Activated CD8-positive, alpha-beta T cell treated with anti-CD3 and anti-CD28 coated beads for 36 hours (primary cell): ENCODE measurements at regions of chr5 and their contacts with region 1.

Region 1: DNA sequence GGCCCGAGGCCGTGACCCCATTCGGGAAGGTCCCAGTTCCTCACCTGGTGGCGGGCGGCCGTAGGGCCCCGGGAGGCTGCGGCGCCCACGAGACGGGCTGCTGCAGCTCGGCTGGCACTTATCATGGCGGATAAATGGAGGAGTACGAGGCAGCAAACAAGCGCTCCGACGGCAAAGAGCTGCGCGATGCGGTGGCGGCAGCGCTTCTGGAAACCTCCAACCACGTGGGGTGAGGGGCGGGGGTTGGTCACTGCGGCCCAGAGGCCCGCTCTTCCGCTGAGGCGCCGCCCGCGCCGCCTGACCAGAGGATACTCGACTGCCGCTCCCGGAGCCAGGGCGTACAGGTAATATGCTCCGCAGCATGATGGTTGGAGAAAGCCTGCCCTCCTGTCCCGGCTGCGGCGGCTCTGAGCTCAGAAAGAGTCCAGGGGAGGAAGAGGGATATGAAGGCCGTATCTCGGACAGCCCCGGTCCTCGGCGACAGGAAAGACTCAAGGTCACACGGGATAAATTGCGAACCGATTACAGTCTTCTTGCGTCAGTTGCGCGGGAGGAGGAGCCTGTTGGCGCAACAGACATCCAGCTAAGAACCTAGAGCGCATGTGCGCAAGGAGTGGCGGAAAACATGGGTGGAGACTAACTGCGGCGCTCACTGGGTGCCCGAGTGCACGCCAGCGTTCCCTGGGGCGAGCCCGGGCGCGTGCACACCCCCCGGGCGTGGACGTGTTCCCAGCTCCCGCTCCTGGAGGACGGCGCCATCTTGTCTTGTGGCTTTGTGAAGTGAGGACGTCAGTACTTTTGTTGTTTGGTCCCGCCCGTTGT is at the start of gene HSPA9:
- DNase-seq: peak; percentile 99
- ATAC-seq: peak; percentile 89
- H3K4me3 Mint-ChIP-seq: peak within 1 kb of the TSS; percentile 98
- H3K27ac Mint-ChIP-seq: peak within 1 kb of the TSS; percentile 100
- H3K4me1 Mint-ChIP-seq: peaks cover 34% of the 10 kb centered on the region
- H3K27me3 Mint-ChIP-seq: no peaks in the 10 kb centered on the region
- CTCF ChIP-seq: no peak
- total RNA-seq, gene HSPA9: 426 to 442 TPM

Region 2: GRCh38 chr5:138464008-138464387 is 111.4 kb before region 1 on chr5:
- CTCF ChIA-PET with region 1: interaction called, 3 read pairs
- POLR2A ChIA-PET with region 1: interaction called, 12 read pairs
- intact Hi-C with region 1: no loop called
- DNase-seq: peak; percentile 94
- ATAC-seq: peak; percentile 57
- H3K4me3 Mint-ChIP-seq: peak overlapping the region; percentile 82
- H3K27ac Mint-ChIP-seq: peak overlapping the region; percentile 97
- H3K4me1 Mint-ChIP-seq: peaks cover 53% of the 10 kb centered on the region
- H3K27me3 Mint-ChIP-seq: no peaks in the 10 kb centered on the region
- CTCF ChIP-seq: peak; percentile 94

Region 3: GRCh38 chr5:138542956-138543729 is 32.3 kb before region 1 on chr5 and contains the start of gene ETF1:
- CTCF ChIA-PET with region 1: interaction called, 13 read pairs
- POLR2A ChIA-PET with region 1: interaction called, 36 read pairs
- intact Hi-C with region 1: loop called (anchors 1 kb)
- DNase-seq: peak; percentile 100
- ATAC-seq: peak; percentile 94
- H3K4me3 Mint-ChIP-seq: peak within 1 kb of the TSS; percentile 99
- H3K27ac Mint-ChIP-seq: peak within 1 kb of the TSS; percentile 100
- H3K4me1 Mint-ChIP-seq: peaks cover 67% of the 10 kb centered on the region
- H3K27me3 Mint-ChIP-seq: no peaks in the 10 kb centered on the region
- CTCF ChIP-seq: no peak
- total RNA-seq, gene ETF1: 154 to 161 TPM

Region 4: DNA sequence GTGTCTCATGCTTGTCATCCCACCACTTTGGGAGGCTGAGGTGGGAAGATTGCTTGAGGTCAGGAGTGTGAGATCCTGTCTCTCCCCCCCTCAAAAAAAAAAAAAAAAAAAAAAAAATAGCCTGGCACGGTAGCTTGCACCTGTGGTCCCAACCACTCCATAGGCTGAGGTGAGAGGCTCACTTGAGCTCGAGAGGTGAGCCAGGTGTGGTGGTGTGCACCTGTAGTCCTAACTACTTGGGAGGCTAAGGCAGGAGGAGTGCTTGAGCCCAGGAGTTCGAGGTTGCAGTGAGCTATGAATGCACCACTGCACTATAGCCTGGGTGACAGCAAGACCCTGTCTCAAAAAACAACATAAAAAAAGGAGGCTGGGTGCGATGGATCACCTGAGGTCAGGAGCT is 22.7 kb before region 1 on chr5:
- CTCF ChIA-PET with region 1: interaction called, 13 read pairs
- POLR2A ChIA-PET with region 1: interaction called, 31 read pairs
- intact Hi-C with region 1: no loop called
- DNase-seq: no peak
- ATAC-seq: no peak
- H3K4me3 Mint-ChIP-seq: no peak overlapping the region
- H3K27ac Mint-ChIP-seq: no peak overlapping the region
- H3K4me1 Mint-ChIP-seq: peaks cover 12% of the 10 kb centered on the region
- H3K27me3 Mint-ChIP-seq: no peaks in the 10 kb centered on the region
- CTCF ChIP-seq: no peak

Region 5: GRCh38 chr5:138559937-138560336 is 15.5 kb before region 1 on chr5:
- CTCF ChIA-PET with region 1: interaction called, 3 read pairs
- POLR2A ChIA-PET with region 1: interaction called, 27 read pairs
- intact Hi-C with region 1: no loop called
- DNase-seq: no peak
- ATAC-seq: no peak
- H3K4me3 Mint-ChIP-seq: no peak overlapping the region
- H3K27ac Mint-ChIP-seq: peak overlapping the region; percentile 75
- H3K4me1 Mint-ChIP-seq: peaks cover 38% of the 10 kb centered on the region
- H3K27me3 Mint-ChIP-seq: no peaks in the 10 kb centered on the region
- CTCF ChIP-seq: no peak

Region 6: DNA sequence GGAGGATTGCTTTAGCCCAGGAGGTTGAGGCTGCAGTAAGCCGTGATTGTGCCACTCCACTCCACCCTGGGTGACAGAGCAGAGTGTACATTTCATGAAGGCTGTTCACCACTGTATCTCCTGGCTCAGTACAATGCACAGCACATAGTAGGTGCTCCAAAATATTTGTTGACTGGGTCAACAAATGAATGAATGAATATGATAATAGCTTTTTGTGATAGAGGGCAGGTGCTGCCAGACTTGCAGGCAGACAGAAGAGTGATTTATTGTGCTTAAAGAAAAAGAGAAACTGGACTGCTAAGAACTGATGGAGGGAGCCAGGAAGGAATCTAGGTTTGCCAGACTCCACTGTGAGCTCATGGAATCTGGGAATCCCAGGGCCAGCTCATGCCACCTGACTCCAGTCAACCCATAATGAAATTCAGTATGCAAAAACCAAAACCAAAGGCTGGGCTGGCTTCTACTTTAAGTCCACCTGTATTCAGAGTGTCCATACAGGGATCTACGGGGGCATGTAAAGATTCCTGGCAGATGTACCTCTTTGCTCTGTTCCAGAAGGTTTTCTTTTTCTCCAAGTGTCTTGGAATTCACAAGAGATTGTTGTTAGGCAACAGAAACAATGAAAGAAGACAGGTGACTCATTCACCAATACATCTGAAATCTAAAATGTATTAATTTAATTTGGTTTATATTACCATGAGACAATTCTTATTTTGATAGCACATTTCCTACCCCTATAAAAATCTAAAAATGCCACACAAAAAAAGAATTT is 162.3 kb after region 1 on chr5:
- CTCF ChIA-PET with region 1: no interaction called
- POLR2A ChIA-PET with region 1: no interaction called
- intact Hi-C with region 1: no loop called
- DNase-seq: no peak
- ATAC-seq: no peak
- H3K4me3 Mint-ChIP-seq: no peak overlapping the region
- H3K27ac Mint-ChIP-seq: no peak overlapping the region
- H3K4me1 Mint-ChIP-seq: peaks cover 25% of the 10 kb centered on the region
- H3K27me3 Mint-ChIP-seq: peaks cover 12% of the 10 kb centered on the region
- CTCF ChIP-seq: no peak

Region 7: GRCh38 chr5:138789771-138790242 is 214.4 kb after region 1 on chr5:
- CTCF ChIA-PET with region 1: interaction called, 15 read pairs
- POLR2A ChIA-PET with region 1: interaction called, 4 read pairs
- intact Hi-C with region 1: no loop called
- DNase-seq: peak; percentile 13
- ATAC-seq: peak; percentile 56
- H3K4me3 Mint-ChIP-seq: no peak overlapping the region
- H3K27ac Mint-ChIP-seq: no peak overlapping the region
- H3K4me1 Mint-ChIP-seq: peaks cover 30% of the 10 kb centered on the region
- H3K27me3 Mint-ChIP-seq: peaks cover 55% of the 10 kb centered on the region
- CTCF ChIP-seq: peak; percentile 70

Region 8: DNA sequence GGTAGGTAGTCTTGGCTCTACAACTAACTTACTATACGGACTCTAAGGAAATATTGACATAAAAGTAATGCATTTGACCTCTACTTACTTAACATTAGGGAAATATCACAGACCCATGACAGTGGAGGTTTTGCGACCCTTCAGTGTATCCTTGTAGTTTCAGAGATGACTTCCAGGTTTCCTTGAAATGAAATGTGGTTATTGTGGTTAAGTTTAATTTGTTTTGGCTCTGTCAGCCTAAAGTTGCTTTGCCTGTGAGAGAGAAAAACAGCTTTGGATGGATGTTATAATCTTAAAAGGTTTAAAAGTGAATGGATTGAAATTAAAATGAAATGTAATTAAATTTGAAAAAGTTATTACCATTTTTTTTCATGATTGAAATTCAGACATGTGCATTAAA is 256.8 kb after region 1 on chr5:
- CTCF ChIA-PET with region 1: no interaction called
- POLR2A ChIA-PET with region 1: no interaction called
- intact Hi-C with region 1: no loop called
- DNase-seq: no peak
- ATAC-seq: no peak
- H3K4me3 Mint-ChIP-seq: no peak overlapping the region
- H3K27ac Mint-ChIP-seq: no peak overlapping the region
- H3K4me1 Mint-ChIP-seq: no peaks in the 10 kb centered on the region
- H3K27me3 Mint-ChIP-seq: peaks cover 5% of the 10 kb centered on the region
- CTCF ChIP-seq: no peak

Region 9: GRCh38 chr5:138922494-138922893 is 347.1 kb after region 1 on chr5:
- CTCF ChIA-PET with region 1: no interaction called
- POLR2A ChIA-PET with region 1: no interaction called
- intact Hi-C with region 1: no loop called
- DNase-seq: no peak
- ATAC-seq: no peak
- H3K4me3 Mint-ChIP-seq: no peak overlapping the region
- H3K27ac Mint-ChIP-seq: no peak overlapping the region
- H3K4me1 Mint-ChIP-seq: no peaks in the 10 kb centered on the region
- H3K27me3 Mint-ChIP-seq: no peaks in the 10 kb centered on the region
- CTCF ChIP-seq: no peak

Region 10: DNA sequence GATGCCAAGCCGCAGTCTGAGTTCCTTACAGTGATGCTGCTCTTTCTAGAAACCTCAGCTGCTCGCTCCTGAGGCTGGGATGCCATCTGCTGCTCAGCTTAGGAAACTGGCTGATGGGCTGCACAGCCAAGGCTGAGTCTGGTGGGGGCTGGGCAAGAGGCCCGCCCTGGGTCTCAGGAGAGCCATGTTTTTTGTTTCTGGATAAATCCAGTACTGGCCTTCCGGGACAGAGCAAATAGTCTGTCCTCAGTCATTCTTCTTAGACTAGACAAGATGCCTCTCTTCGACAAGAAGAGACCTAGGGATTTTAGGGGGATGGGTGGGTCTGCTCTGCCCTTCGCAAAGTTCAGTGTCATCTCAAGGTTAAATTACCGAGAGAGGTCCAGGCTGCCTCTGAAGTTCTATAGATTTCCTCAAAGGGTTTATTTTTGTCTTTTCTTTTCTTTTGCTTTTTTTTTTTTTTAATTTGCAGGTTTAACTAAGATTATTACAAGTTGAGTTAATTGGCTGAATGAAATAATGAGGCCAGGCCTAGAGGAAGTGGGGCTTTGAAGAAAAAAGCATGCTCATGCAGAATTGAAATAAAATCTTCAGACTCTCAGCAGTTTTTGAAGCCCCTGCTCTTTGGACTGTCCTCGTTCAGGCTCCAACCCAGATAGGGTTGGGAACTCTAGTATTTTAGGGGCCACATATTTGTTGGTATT is 687.5 kb after region 1 on chr5:
- CTCF ChIA-PET with region 1: interaction called, 6 read pairs
- POLR2A ChIA-PET with region 1: no interaction called
- intact Hi-C with region 1: loop called (anchors 10 kb)
- DNase-seq: peak; percentile 86
- ATAC-seq: peak; percentile 100
- H3K4me3 Mint-ChIP-seq: no peak overlapping the region
- H3K27ac Mint-ChIP-seq: no peak overlapping the region
- H3K4me1 Mint-ChIP-seq: peaks cover 10% of the 10 kb centered on the region
- H3K27me3 Mint-ChIP-seq: no peaks in the 10 kb centered on the region
- CTCF ChIP-seq: peak; percentile 79